B cell (primary cell): ENCODE measurements at regions of chr7 and their contacts with region 1.

Region 1: GRCh38 chr7:151123822-151124464 is 37.7 kb downstream of the AGAP3 start:
- DNase-seq: peak; percentile 85
- ATAC-seq: peak; percentile 98
- H3K4me3 ChIP-seq: no peak overlapping the region
- H3K4me3 Mint-ChIP-seq: no peak overlapping the region
- H3K27ac ChIP-seq: no peak overlapping the region
- H3K27ac Mint-ChIP-seq: no peak overlapping the region
- H3K4me1 ChIP-seq: peaks cover 0 to 6% of the 10 kb centered on the region in 2 donors
- H3K4me1 Mint-ChIP-seq: peaks cover 3% of the 10 kb centered on the region
- H3K27me3 ChIP-seq: no peaks in the 10 kb centered on the region
- H3K27me3 Mint-ChIP-seq: peaks cover 3% of the 10 kb centered on the region
- CTCF ChIP-seq: peak; percentile 93

Region 2: GRCh38 chr7:151304856-151305255 is 180.9 kb after region 1 on chr7:
- CTCF ChIA-PET with region 1: interaction called, 17 read pairs
- POLR2A ChIA-PET with region 1: no interaction called
- intact Hi-C with region 1: no loop called
- DNase-seq: no peak
- ATAC-seq: no peak
- H3K4me3 ChIP-seq: no peak overlapping the region
- H3K4me3 Mint-ChIP-seq: no peak overlapping the region
- H3K27ac ChIP-seq: no peak overlapping the region
- H3K27ac Mint-ChIP-seq: no peak overlapping the region
- H3K4me1 ChIP-seq: peaks cover 7 to 13% of the 10 kb centered on the region in 2 donors
- H3K4me1 Mint-ChIP-seq: peaks cover 10% of the 10 kb centered on the region
- H3K27me3 ChIP-seq: peaks cover 0 to 57% (median 22%) of the 10 kb centered on the region in 4 experiments
- H3K27me3 Mint-ChIP-seq: peaks cover 37% of the 10 kb centered on the region
- CTCF ChIP-seq: no peak